ENCODE measurements at regions of chr7 and their contacts with region 1.

Region 1: DNA sequence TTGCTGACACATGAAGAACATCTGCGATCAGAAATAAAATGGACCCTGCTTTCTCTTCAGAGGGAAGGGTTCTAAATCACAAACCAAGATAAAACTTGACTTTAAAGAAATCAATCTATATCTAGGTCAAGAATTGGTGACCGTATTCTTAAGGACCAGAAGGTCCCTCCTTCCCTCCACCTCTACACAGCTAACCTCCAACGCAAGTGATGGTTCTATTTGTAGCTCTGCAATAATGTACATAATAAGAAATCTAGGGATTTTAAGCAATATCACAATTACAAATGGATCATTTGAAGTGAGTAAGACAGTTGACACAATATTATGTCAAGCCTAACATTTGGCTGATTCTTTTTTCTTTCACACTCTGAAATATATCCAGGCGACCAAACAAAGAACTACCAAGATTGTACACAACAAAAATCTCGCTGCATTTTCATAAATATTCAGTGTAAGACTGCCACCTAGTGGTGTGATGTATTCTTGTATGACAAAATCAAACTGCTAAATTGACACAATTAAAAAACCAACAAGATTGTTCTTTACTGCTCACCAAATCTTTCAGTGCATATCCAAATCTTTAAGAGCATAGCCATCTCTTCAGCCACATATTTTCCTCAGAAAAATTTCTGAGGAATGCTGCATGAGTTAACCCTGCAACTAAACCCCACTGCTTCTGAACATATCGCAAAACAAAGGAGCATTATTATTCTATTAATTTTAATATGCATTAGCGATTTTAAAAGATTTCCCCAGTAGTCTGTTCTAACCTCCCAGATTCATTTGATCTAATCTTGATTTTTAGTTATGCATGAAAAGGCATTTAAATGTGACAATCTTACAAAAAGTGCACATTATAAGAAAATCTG is 44.5 kb downstream of the ICA1 start:
- DNase-seq: no peak
- H3K4me3 Mint-ChIP-seq: no peak overlapping the region
- H3K27ac Mint-ChIP-seq: no peak overlapping the region
- H3K4me1 Mint-ChIP-seq: peaks cover 2% of the 10 kb centered on the region
- H3K27me3 Mint-ChIP-seq: no peaks in the 10 kb centered on the region

Region 2: GRCh38 chr7:7595451-7595850 is 622.0 kb before region 1 on chr7:
- CTCF ChIA-PET with region 1: interaction called, 4 read pairs
- POLR2A ChIA-PET with region 1: no interaction called
- intact Hi-C with region 1: loop called (anchors 2 kb)
- DNase-seq: no peak
- H3K4me3 Mint-ChIP-seq: no peak overlapping the region
- H3K27ac Mint-ChIP-seq: no peak overlapping the region
- H3K4me1 Mint-ChIP-seq: no peaks in the 10 kb centered on the region
- H3K27me3 Mint-ChIP-seq: no peaks in the 10 kb centered on the region

Region 3: GRCh38 chr7:7681179-7681935 is 536.1 kb before region 1 on chr7:
- CTCF ChIA-PET with region 1: interaction called, 19 read pairs
- POLR2A ChIA-PET with region 1: no interaction called
- intact Hi-C with region 1: loop called (anchors 1 kb)
- DNase-seq: no peak
- H3K4me3 Mint-ChIP-seq: no peak overlapping the region
- H3K27ac Mint-ChIP-seq: peak overlapping the region; percentile 52
- H3K4me1 Mint-ChIP-seq: peaks cover 30% of the 10 kb centered on the region
- H3K27me3 Mint-ChIP-seq: no peaks in the 10 kb centered on the region

Region 4: GRCh38 chr7:8070451-8071180 is 146.8 kb before region 1 on chr7:
- CTCF ChIA-PET with region 1: no interaction called
- POLR2A ChIA-PET with region 1: no interaction called
- intact Hi-C with region 1: no loop called
- DNase-seq: no peak
- H3K4me3 Mint-ChIP-seq: no peak overlapping the region
- H3K27ac Mint-ChIP-seq: no peak overlapping the region
- H3K4me1 Mint-ChIP-seq: peaks cover 19% of the 10 kb centered on the region
- H3K27me3 Mint-ChIP-seq: no peaks in the 10 kb centered on the region

Region 5: GRCh38 chr7:8206956-8207355 is 10.5 kb before region 1 on chr7:
- CTCF ChIA-PET with region 1: interaction called, 11 read pairs
- POLR2A ChIA-PET with region 1: no interaction called
- intact Hi-C with region 1: no loop called
- DNase-seq: no peak
- H3K4me3 Mint-ChIP-seq: no peak overlapping the region
- H3K27ac Mint-ChIP-seq: no peak overlapping the region
- H3K4me1 Mint-ChIP-seq: no peaks in the 10 kb centered on the region
- H3K27me3 Mint-ChIP-seq: no peaks in the 10 kb centered on the region

Measured in activated CD4-positive, alpha-beta memory T cell treated with anti-CD3 and anti-CD28 coated beads for 36 hours (primary cell).